ENCODE measurements at regions of chr10 and their contacts with region 1.

Region 1: GRCh38 chr10:7410862-7411670 is at the start of gene SFMBT2:
- DNase-seq: peak; percentile 60
- H3K4me3 Mint-ChIP-seq: peak within 1 kb of the TSS; percentile 97
- H3K27ac Mint-ChIP-seq: peak within 1 kb of the TSS; percentile 89
- H3K4me1 Mint-ChIP-seq: peaks cover 36% of the 10 kb centered on the region
- H3K27me3 Mint-ChIP-seq: peaks cover 23% of the 10 kb centered on the region
- total RNA-seq, gene SFMBT2: 27.6 and 27.7 TPM in 2 replicates

Region 2: DNA sequence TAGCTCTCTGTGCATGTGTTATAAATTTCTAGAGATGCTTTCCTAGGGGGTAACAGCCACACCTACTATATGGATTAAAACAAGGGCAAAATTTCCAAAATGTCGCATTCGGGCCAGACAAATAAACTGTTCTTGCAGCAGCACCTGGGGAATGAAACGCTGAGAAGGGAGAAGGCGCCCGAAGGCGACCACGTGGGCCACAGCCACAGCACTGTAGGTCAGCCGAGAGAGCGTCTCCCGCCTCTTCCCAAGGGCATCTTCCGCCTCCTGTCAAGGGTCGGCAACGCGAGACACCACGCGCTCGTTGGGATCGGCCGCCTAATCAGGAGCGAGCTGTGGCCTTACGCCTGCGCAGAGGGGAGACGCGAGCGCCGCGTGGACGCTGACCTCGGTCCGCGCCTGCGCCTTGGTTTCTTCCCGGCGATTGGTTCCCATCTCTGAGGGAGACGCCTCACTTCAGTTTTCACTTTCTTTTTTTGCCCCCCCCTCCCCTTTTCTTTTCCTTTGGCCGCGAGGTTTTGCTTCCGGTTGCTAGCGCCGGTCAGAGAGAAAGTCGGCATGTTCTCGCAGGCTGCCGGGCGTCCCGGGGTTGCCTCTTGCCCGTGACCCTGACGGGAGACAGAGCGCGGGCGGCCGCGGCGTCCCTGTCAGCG is 1726.6 kb before region 1 on chr10 and contains the start of gene TASOR2:
- intact Hi-C with region 1: loop called (anchors 10 kb)
- DNase-seq: peak; percentile 96
- H3K4me3 Mint-ChIP-seq: peak within 1 kb of the TSS; percentile 96
- H3K27ac Mint-ChIP-seq: peak within 1 kb of the TSS; percentile 97
- H3K4me1 Mint-ChIP-seq: peaks cover 51% of the 10 kb centered on the region
- H3K27me3 Mint-ChIP-seq: peaks cover 9% of the 10 kb centered on the region
- total RNA-seq, gene TASOR2: 60.1 and 68.7 TPM in 2 replicates

Region 3: GRCh38 chr10:6920072-6921019 is 490.7 kb before region 1 on chr10:
- intact Hi-C with region 1: loop called (anchors 2 kb)
- DNase-seq: peak; percentile 69
- H3K4me3 Mint-ChIP-seq: no peak overlapping the region
- H3K27ac Mint-ChIP-seq: no peak overlapping the region
- H3K4me1 Mint-ChIP-seq: peaks cover 20% of the 10 kb centered on the region
- H3K27me3 Mint-ChIP-seq: peaks cover 16% of the 10 kb centered on the region

Region 4: GRCh38 chr10:7184660-7185366 is 226.3 kb before region 1 on chr10:
- intact Hi-C with region 1: loop called (anchors 1 kb)
- DNase-seq: no peak
- H3K4me3 Mint-ChIP-seq: peak overlapping the region; percentile 47
- H3K27ac Mint-ChIP-seq: peak overlapping the region; percentile 87
- H3K4me1 Mint-ChIP-seq: peaks cover 58% of the 10 kb centered on the region
- H3K27me3 Mint-ChIP-seq: no peaks in the 10 kb centered on the region

Region 5: DNA sequence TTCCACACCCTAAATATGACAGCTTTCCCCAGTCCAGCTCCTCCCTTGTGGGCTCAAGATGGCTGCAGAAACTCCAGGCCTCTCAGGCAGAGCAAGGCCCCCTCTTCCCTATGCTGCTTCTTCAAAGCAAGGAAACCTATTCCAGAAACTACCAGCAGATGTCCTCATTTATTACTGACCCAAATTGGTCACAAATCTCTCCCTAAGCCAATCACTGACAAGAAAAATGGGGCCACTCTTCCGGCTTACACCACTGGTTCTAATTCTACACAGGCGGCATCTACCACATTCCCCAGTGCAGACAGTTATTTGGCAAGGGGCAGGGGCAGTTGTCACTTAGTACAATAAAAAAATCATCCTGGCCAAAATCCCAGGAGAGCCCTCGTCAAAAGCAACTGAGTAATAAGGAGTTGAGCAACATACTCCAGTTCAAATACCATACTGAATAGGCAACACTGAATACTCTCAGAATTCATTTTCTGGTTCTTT is 150.6 kb before region 1 on chr10:
- intact Hi-C with region 1: loop called (anchors 1 kb)
- DNase-seq: no peak
- H3K4me3 Mint-ChIP-seq: peak overlapping the region; percentile 40
- H3K27ac Mint-ChIP-seq: peak overlapping the region; percentile 62
- H3K4me1 Mint-ChIP-seq: peaks cover 54% of the 10 kb centered on the region
- H3K27me3 Mint-ChIP-seq: no peaks in the 10 kb centered on the region